Right ventricle myocardium inferior (tissue), 1 donor: ENCODE measurements at regions of chr11 and their contacts with region 1.

Region 1: GRCh38 chr11:44936525-44936924 is 14.2 kb downstream of the TP53I11 start:
- DNase-seq: peak; percentile 90
- ATAC-seq: peak; percentile 49

Region 2: GRCh38 chr11:44804449-44805437 is 131.8 kb before region 1 on chr11:
- intact Hi-C with region 1: no loop called
- DNase-seq: no peak
- ATAC-seq: peak; percentile 33

Region 3: GRCh38 chr11:45298718-45299117 is 362.2 kb after region 1 on chr11:
- intact Hi-C with region 1: loop called (anchors 10 kb)
- DNase-seq: no peak
- ATAC-seq: no peak

Region 4: GRCh38 chr11:45319077-45319476 is 382.6 kb after region 1 on chr11:
- intact Hi-C with region 1: no loop called
- DNase-seq: no peak
- ATAC-seq: no peak